IMR-90 (cell line): ENCODE measurements at regions of chr6 and their contacts with region 1.

Region 1: GRCh38 chr6:84220809-84221409 is 6.5 kb downstream of the CEP162 start:
- DNase-seq: peak; percentile 36
- ATAC-seq: 0 out of 2 replicates have a peak, but pooled peaks have one; percentile 54
- H3K4me3 ChIP-seq: no peak overlapping the region
- H3K27ac ChIP-seq: no peak overlapping the region
- H3K4me1 ChIP-seq: no peaks in the 10 kb centered on the region
- H3K27me3 ChIP-seq: no peaks in the 10 kb centered on the region
- CTCF ChIP-seq: peak; percentile 63
- POLR2A ChIP-seq: no peak
- RAD21 ChIP-seq: peak; percentile 64

Region 2: DNA sequence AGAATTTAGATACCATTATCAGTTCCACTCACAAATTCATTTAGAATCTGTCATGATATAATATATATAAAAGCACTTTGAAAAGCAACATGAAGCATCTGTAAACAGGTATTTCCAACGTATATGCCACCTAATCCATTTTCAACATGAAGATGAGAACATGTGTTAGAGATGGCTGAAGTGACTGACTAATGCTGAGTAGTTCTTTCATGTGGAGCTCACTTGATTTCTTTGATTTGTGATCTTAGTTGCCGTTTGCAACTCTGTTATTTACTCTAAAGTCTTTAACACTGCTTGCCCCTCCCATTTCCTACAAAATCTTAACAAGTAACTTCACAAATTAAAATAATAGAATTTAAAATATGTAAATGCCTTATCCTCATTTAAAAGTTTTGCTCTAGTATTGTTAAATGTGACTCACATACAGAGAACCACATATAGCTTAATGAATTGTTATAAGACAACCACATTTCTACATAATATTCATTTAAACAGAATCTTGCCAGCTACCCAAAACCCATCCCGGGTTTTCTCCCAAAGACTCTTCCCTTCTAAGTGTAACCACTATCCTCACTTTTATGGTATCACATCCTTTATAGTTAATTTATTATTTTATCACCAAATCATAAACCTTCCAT is 868.4 kb before region 1 on chr6:
- CTCF ChIA-PET with region 1: no interaction called
- POLR2A ChIA-PET with region 1: no interaction called
- dilution Hi-C with region 1: no loop called
- in situ Hi-C with region 1: no loop called
- intact Hi-C with region 1: no loop called
- DNase-seq: peak; percentile 36
- ATAC-seq: no peak
- H3K4me3 ChIP-seq: no peak overlapping the region
- H3K27ac ChIP-seq: no peak overlapping the region
- H3K4me1 ChIP-seq: no peaks in the 10 kb centered on the region
- H3K27me3 ChIP-seq: no peaks in the 10 kb centered on the region
- CTCF ChIP-seq: no peak
- POLR2A ChIP-seq: no peak
- RAD21 ChIP-seq: no peak

Region 3: GRCh38 chr6:83536034-83536646 is 684.8 kb before region 1 on chr6:
- CTCF ChIA-PET with region 1: no interaction called
- POLR2A ChIA-PET with region 1: no interaction called
- dilution Hi-C with region 1: no loop called
- in situ Hi-C with region 1: no loop called
- intact Hi-C with region 1: loop called (anchors 5 kb)
- DNase-seq: peak; percentile 53
- ATAC-seq: peak; percentile 78; the same call in 1 of the 2 replicates
- H3K4me3 ChIP-seq: no peak overlapping the region
- H3K27ac ChIP-seq: no peak overlapping the region
- H3K4me1 ChIP-seq: no peaks in the 10 kb centered on the region
- H3K27me3 ChIP-seq: peaks cover 6% of the 10 kb centered on the region
- CTCF ChIP-seq: peak; percentile 75
- POLR2A ChIP-seq: no peak
- RAD21 ChIP-seq: peak; percentile 68

Region 4: DNA sequence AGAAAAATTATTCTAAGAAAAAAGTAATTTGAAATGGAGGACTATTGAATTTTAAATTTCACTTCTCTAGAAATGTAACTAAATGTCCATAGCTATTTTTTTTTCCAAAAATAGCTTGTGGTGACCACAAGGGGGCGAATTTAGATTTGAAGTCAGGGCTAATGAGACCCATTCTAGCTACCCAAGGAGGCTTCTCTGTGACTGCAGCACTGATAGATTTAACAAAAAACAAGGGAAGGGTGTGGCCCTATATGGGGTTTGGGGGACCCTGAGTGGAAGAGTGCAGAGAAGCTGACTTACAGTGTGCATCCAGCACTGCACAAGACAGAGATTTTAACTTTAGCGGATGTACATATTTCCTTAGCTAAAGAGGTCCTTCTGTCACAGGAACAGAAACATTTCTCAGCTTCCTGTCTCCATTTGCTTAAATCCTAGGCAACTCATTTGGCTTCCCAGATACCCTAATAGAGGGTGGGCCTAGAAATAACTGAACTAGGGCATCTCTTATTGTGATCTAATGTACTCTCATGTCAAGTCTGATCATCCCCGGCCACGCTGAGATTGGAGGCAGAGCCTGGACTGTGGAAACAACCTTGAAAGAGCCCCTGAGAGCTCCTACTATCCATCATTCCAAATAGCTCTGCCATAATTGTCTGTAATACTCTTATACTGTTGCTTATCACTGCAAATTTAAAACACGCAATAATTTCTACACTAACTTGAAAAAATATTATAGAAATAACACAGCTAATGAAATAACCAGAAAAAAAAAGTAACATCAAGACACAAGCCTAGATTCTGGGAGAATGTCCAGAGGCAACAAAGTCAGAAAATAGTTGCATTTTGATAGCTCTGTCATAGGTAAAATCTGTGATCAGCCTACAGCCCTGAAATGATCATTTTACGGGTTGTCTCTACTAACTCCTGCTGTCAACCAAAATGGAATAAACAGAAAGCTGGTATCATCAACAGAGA is 605.6 kb before region 1 on chr6:
- CTCF ChIA-PET with region 1: interaction called, 4 read pairs
- POLR2A ChIA-PET with region 1: no interaction called
- dilution Hi-C with region 1: no loop called
- in situ Hi-C with region 1: loop called (anchors 25 kb)
- intact Hi-C with region 1: loop called (anchors 2 kb)
- DNase-seq: peak; percentile 37
- ATAC-seq: peak; percentile 69
- H3K4me3 ChIP-seq: no peak overlapping the region
- H3K27ac ChIP-seq: no peak overlapping the region
- H3K4me1 ChIP-seq: no peaks in the 10 kb centered on the region
- H3K27me3 ChIP-seq: no peaks in the 10 kb centered on the region
- CTCF ChIP-seq: peak; percentile 54
- POLR2A ChIP-seq: no peak
- RAD21 ChIP-seq: peak; percentile 48

Region 5: GRCh38 chr6:83853178-83854000 is 367.5 kb before region 1 on chr6 and contains the start of gene RIPPLY2:
- CTCF ChIA-PET with region 1: no interaction called
- POLR2A ChIA-PET with region 1: no interaction called
- dilution Hi-C with region 1: no loop called
- in situ Hi-C with region 1: no loop called
- intact Hi-C with region 1: no loop called
- DNase-seq: peak; percentile 20
- ATAC-seq: peak; percentile 96
- H3K4me3 ChIP-seq: peak within 1 kb of the TSS; percentile 37
- H3K27ac ChIP-seq: no peak within 1 kb of the TSS
- H3K4me1 ChIP-seq: no peaks in the 10 kb centered on the region
- H3K27me3 ChIP-seq: peaks cover 21% of the 10 kb centered on the region
- CTCF ChIP-seq: no peak
- POLR2A ChIP-seq: no peak
- RAD21 ChIP-seq: no peak
- total RNA-seq, gene RIPPLY2: not detected in 2 replicates

Region 6: GRCh38 chr6:83884523-83884922 is 336.4 kb before region 1 on chr6:
- CTCF ChIA-PET with region 1: interaction called, 4 read pairs
- POLR2A ChIA-PET with region 1: no interaction called
- dilution Hi-C with region 1: no loop called
- in situ Hi-C with region 1: no loop called
- intact Hi-C with region 1: loop called (anchors 1 kb)
- DNase-seq: peak; percentile 58
- ATAC-seq: peak; percentile 75
- H3K4me3 ChIP-seq: no peak overlapping the region
- H3K27ac ChIP-seq: no peak overlapping the region
- H3K4me1 ChIP-seq: no peaks in the 10 kb centered on the region
- H3K27me3 ChIP-seq: no peaks in the 10 kb centered on the region
- CTCF ChIP-seq: peak; percentile 76
- POLR2A ChIP-seq: no peak
- RAD21 ChIP-seq: peak; percentile 83

Region 7: GRCh38 chr6:83893024-83893423 is 327.9 kb before region 1 on chr6:
- CTCF ChIA-PET with region 1: interaction called, 4 read pairs
- POLR2A ChIA-PET with region 1: no interaction called
- dilution Hi-C with region 1: no loop called
- in situ Hi-C with region 1: loop called (anchors 5 kb)
- intact Hi-C with region 1: no loop called
- DNase-seq: no peak
- ATAC-seq: no peak
- H3K4me3 ChIP-seq: no peak overlapping the region
- H3K27ac ChIP-seq: no peak overlapping the region
- H3K4me1 ChIP-seq: no peaks in the 10 kb centered on the region
- H3K27me3 ChIP-seq: no peaks in the 10 kb centered on the region
- CTCF ChIP-seq: no peak
- POLR2A ChIP-seq: no peak
- RAD21 ChIP-seq: no peak